Ascending aorta (tissue), 2 donors: ENCODE measurements at regions of chr15 and their contacts with region 1.

Region 1: GRCh38 chr15:78811124-78811824 is at the start of gene ADAMTS7:
- DNase-seq: peak in 1 of 2 donors; percentile 86
- H3K4me3 ChIP-seq: peak within 1 kb of the TSS; percentile 80 to 81
- H3K27ac ChIP-seq: peak within 1 kb of the TSS; percentile 87 to 93
- H3K4me1 ChIP-seq: peaks cover 6 to 7% of the 10 kb centered on the region in 2 donors
- H3K27me3 ChIP-seq: no peaks in the 10 kb centered on the region
- CTCF ChIP-seq: peak; percentile 70 to 77 (median 77)
- total RNA-seq, gene ADAMTS7: 33.3 TPM

Region 2: DNA sequence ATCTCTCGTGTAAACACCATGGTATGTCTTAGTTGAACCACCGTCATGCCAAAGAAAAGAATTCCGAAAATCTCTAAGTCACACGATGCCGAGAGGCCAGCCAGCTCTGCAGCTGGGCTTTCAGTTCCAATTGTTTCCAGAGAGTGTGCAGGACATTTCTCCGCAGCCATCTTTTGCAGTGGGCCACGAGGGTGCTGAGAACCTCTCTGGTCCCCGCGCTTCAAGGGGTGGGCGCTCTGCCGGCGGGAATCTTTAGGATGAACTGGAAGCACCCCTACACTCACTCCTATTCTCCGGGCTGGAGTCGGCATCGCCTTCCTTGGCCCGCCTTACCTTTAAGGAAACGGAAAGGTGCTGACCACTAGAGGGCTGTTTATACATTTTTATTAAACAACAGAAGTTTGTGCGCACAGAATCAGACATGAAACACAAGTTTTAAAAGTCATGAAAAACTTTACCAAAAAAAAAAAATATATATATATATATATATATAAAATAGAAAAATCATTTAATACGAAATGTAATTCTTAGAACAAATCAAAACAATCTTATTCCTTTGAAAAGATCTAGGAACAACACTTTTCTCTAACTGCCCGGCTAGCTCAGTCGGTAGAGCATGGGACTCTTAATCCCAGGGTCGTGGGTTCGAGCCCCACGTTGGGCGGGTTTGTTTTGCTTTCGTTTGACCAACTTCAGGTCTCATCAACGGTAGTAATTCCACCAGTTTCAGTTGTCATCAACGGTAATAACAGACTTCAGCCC is 48.9 kb after region 1 on chr15:
- intact Hi-C with region 1: loop called (anchors 1 kb)
- DNase-seq: peak in 1 of 2 donors; percentile 87
- H3K4me3 ChIP-seq: peak overlapping the region; percentile 50 to 65
- H3K27ac ChIP-seq: peak overlapping the region; percentile 83
- H3K4me1 ChIP-seq: peaks cover 6 to 12% of the 10 kb centered on the region in 2 donors
- H3K27me3 ChIP-seq: no peaks in the 10 kb centered on the region
- CTCF ChIP-seq: peak; percentile 48 to 61 (median 52)